ENCODE measurements at regions of chr2 and their contacts with region 1.

Region 1: DNA sequence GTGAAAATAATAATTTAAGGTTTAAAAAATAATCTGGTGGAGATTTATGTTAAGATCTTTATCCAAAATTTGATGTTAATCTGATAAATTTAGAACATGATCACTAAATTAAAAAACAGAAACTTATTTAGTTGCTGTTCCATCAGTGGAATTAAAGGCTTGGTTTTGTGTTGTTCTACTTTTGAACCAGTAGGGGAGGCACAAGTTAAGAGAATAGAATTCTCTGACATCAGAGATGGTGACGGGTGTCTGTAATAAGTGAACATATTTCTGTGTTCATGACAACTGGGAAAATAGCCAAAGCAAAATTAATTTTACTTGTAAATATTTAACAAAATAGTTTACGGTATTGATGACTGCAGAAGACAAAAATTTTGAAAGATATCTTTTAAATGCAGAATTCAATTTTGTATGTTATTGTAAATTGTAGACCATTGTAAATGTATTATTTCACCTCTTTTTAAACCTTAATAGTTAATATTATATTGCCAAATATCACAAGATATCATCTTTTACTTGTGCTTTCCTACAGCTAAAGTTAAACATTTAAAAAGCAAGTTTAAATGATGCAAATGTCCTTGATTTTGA is 106.0 kb downstream of the UBR3 start:
- DNase-seq: peak; percentile 22
- ATAC-seq: peak; percentile 58
- H3K4me3 ChIP-seq: no peak overlapping the region
- H3K27ac ChIP-seq: no peak overlapping the region
- H3K4me1 ChIP-seq: no peaks in the 10 kb centered on the region
- H3K27me3 ChIP-seq: no peaks in the 10 kb centered on the region
- CTCF ChIP-seq: peak; percentile 43 to 60 (median 51); a peak in 5 of 6 replicates
- POLR2A ChIP-seq: no peak
- RAD21 ChIP-seq: peak; percentile 74

Region 2: DNA sequence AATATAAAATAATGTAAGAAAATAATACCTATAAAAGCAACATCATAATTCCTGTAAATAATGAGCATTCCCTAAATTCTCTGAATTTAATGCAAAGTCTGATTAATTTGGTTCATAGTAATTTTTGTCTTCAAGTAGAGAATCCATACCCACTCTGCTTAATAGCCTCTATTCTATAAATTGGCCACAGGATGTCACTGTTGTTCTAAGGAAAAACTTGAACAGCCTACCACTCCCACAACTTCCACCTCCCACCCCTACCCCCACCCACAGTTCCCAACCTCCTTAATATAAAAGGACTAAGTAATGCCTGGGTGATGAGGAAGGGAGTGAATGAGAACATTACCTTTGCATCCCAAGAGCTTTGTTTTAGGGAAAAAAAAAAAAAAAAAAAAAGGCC is 481.1 kb before region 1 on chr2:
- CTCF ChIA-PET with region 1: interaction called, 8 read pairs
- POLR2A ChIA-PET with region 1: no interaction called
- RAD21 ChIA-PET with region 1: interaction called in 1 of 2 experiments, 3 read pairs
- intact Hi-C with region 1: loop called (anchors 1 kb)
- DNase-seq: peak; percentile 43
- ATAC-seq: peak; percentile 96
- H3K4me3 ChIP-seq: no peak overlapping the region
- H3K27ac ChIP-seq: no peak overlapping the region
- H3K4me1 ChIP-seq: no peaks in the 10 kb centered on the region
- H3K27me3 ChIP-seq: no peaks in the 10 kb centered on the region
- CTCF ChIP-seq: peak; percentile 37 to 57 (median 54); a peak in 5 of 6 replicates
- POLR2A ChIP-seq: no peak
- RAD21 ChIP-seq: peak; percentile 76

Region 3: DNA sequence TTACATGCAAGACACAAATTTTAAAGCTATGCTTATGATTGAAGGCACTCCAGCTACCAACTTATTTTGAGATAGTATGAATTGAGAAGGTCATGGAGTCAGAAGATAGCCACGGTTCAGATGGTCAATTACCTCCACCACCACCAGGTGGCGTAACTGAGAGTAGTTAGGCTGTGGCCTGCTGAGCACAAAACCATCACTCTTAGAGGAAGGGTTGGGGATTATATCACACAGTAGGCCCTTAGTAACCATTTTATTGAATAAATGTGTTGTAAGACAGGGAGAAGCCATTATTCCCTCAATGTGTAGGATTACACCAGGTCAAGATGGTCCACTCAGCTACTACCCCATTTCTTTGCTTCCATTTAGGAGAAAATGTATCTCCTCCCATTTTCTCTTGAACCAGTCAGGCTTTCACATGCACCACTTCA is 404.9 kb before region 1 on chr2:
- CTCF ChIA-PET with region 1: no interaction called
- POLR2A ChIA-PET with region 1: no interaction called
- RAD21 ChIA-PET with region 1: no interaction called
- intact Hi-C with region 1: loop called (anchors 2 kb)
- DNase-seq: peak; percentile 41
- ATAC-seq: peak; percentile 95
- H3K4me3 ChIP-seq: no peak overlapping the region
- H3K27ac ChIP-seq: no peak overlapping the region
- H3K4me1 ChIP-seq: no peaks in the 10 kb centered on the region
- H3K27me3 ChIP-seq: no peaks in the 10 kb centered on the region
- CTCF ChIP-seq: peak; percentile 59 to 92 (median 83)
- POLR2A ChIP-seq: no peak
- RAD21 ChIP-seq: peak; percentile 67

Region 4: DNA sequence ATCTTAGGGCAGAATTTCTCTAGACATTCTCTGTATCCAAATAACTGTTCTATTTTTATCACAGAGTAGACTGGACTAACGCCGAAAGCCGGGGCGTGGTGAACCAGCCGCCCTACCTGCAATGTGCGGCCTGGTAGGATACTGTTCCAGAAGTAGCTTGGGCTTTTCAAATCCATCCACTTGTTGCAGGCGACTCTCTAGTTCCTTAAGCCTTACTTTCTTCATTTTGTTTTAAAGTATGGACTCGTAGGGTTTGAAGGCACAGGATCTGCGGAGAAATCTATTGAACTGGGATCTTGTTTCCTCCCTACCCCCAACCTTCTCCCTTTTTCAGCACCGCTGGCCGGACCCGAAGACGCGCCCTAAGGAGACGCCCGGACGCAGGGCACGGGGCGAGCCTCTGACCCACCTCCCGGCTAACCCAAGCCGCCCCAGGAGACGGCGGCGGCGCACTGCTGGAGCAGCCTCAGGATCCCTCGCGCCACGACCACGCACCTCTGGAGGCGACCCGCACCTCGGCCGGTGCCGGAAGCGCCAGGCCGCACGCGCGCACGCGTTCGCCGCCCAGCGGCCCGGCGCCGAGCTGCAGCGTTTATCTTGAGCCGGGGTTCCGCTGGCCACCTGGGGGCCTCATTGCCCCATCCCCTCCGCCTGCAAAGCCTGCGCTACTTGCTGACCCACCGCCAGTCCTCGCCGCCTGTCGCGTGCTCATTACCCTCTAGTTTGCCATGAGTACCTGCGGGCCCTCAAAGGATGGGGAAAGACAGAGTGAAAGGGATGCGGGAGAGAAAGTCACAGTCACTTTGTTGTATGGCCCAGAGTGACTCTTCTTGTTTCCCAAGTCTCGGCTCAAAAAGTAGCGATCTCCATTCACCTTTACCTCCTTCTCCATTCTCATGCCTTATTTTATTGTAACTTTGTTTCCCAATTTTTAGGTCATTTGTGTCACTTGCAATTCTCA is 108.6 kb before region 1 on chr2 and contains the start of gene METTL5:
- CTCF ChIA-PET with region 1: interaction called, 3 read pairs
- POLR2A ChIA-PET with region 1: no interaction called
- RAD21 ChIA-PET with region 1: no interaction called
- intact Hi-C with region 1: loop called (anchors 2 kb)
- DNase-seq: peak; percentile 72
- ATAC-seq: peak; percentile 69
- H3K4me3 ChIP-seq: peak within 1 kb of the TSS; percentile 60 to 81
- H3K27ac ChIP-seq: peak within 1 kb of the TSS; percentile 88
- H3K4me1 ChIP-seq: peaks cover 22 to 41% of the 10 kb centered on the region in 2 experiments
- H3K27me3 ChIP-seq: no peaks in the 10 kb centered on the region
- CTCF ChIP-seq: peak; percentile 84 to 99 (median 90)
- POLR2A ChIP-seq: peak; percentile 89
- RAD21 ChIP-seq: peak; percentile 86
- total RNA-seq, gene METTL5: 103 TPM

Region 5: GRCh38 chr2:170005484-170006101 is 72.4 kb after region 1 on chr2:
- CTCF ChIA-PET with region 1: no interaction called
- POLR2A ChIA-PET with region 1: no interaction called
- RAD21 ChIA-PET with region 1: no interaction called
- intact Hi-C with region 1: no loop called
- DNase-seq: no peak
- ATAC-seq: peak; percentile 52
- H3K4me3 ChIP-seq: no peak overlapping the region
- H3K27ac ChIP-seq: no peak overlapping the region
- H3K4me1 ChIP-seq: no peaks in the 10 kb centered on the region
- H3K27me3 ChIP-seq: no peaks in the 10 kb centered on the region
- CTCF ChIP-seq: 0 out of 6 replicates have a peak, but pooled peaks of 1 of the 3 experiments have one; percentile 17
- POLR2A ChIP-seq: no peak
- RAD21 ChIP-seq: no peak

Region 6: GRCh38 chr2:170227507-170227947 is 294.3 kb after region 1 on chr2:
- CTCF ChIA-PET with region 1: no interaction called
- POLR2A ChIA-PET with region 1: no interaction called
- RAD21 ChIA-PET with region 1: no interaction called
- intact Hi-C with region 1: loop called (anchors 5 kb)
- DNase-seq: no peak
- ATAC-seq: no peak
- H3K4me3 ChIP-seq: no peak overlapping the region
- H3K27ac ChIP-seq: no peak overlapping the region
- H3K4me1 ChIP-seq: no peaks in the 10 kb centered on the region; a peak in 1 of 4 replicates
- H3K27me3 ChIP-seq: no peaks in the 10 kb centered on the region
- CTCF ChIP-seq: no peak
- POLR2A ChIP-seq: no peak
- RAD21 ChIP-seq: no peak

Region 7: DNA sequence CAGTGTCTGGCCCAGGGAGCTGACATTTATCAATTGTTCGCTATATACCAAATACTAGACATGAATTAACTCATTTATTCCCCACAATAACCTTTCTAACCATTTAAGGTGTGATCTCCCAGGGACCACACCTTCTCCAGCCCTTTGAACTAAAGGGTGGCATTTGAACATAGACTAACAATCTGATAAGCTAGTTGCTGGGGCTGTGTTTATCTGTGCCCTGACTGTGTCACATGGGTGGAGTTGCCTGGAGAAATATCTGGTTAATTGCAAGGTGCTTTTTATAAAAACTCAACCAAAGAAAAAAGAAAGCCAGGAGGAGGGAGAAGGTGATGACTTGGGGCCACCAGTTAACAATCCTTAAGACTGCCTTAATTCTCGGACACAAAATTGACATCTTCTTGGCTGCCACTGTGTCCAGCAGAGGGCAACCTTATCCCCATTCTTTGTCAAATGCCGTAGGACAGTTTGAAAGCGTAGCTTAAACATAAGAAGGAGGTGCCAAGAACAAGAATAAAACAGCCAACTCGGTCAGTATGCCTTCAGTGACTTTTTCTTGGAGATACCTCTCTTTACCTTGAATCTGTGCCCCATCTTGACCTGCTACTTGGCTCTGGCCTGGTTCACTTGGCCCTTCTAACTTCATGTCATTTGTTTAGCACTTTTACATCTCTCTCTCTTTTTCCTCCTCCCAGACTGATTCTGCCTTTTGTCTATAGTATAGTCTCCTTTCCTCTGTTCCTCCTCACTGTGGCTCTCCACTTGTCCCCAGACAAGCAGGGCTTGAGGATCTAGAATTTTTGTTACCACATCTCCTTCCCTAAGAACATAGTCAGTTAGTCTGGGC is 428.1 kb after region 1 on chr2:
- CTCF ChIA-PET with region 1: no interaction called
- POLR2A ChIA-PET with region 1: no interaction called
- RAD21 ChIA-PET with region 1: no interaction called
- intact Hi-C with region 1: loop called (anchors 10 kb)
- DNase-seq: peak; percentile 47
- ATAC-seq: peak; percentile 98
- H3K4me3 ChIP-seq: no peak overlapping the region
- H3K27ac ChIP-seq: no peak overlapping the region
- H3K4me1 ChIP-seq: peaks cover 0 to 6% of the 10 kb centered on the region in 2 experiments; a peak in 1 of 4 replicates
- H3K27me3 ChIP-seq: peaks cover 11% of the 10 kb centered on the region; the same call in 1 of the 2 replicates
- CTCF ChIP-seq: peak; percentile 75 to 89 (median 83)
- POLR2A ChIP-seq: no peak
- RAD21 ChIP-seq: peak; percentile 72

Measured in HCT116 (cell line).